ENCODE measurements at regions of chr10 and their contacts with region 1.

Region 1: GRCh38 chr10:91558473-91558872 is 74.4 kb downstream of the PPP1R3C start:
- DNase-seq: no peak
- H3K4me3 ChIP-seq: no peak overlapping the region
- H3K27ac ChIP-seq: no peak overlapping the region
- H3K4me1 ChIP-seq: no peaks in the 10 kb centered on the region
- H3K27me3 ChIP-seq: no peaks in the 10 kb centered on the region
- CTCF ChIP-seq: no peak

Region 2: GRCh38 chr10:89683883-89684282 is 1874.6 kb before region 1 on chr10:
- CTCF ChIA-PET with region 1: no interaction called
- POLR2A ChIA-PET with region 1: interaction called, 13 read pairs
- intact Hi-C with region 1: no loop called
- DNase-seq: no peak
- H3K4me3 ChIP-seq: no peak overlapping the region
- H3K27ac ChIP-seq: no peak overlapping the region
- H3K4me1 ChIP-seq: no peaks in the 10 kb centered on the region
- H3K27me3 ChIP-seq: no peaks in the 10 kb centered on the region
- CTCF ChIP-seq: no peak

Region 3: GRCh38 chr10:91541481-91541880 is 17.0 kb before region 1 on chr10:
- CTCF ChIA-PET with region 1: no interaction called
- POLR2A ChIA-PET with region 1: no interaction called
- intact Hi-C with region 1: no loop called
- DNase-seq: peak; percentile 97
- H3K4me3 ChIP-seq: no peak overlapping the region
- H3K27ac ChIP-seq: peak overlapping the region; percentile 85
- H3K4me1 ChIP-seq: peaks cover 28% of the 10 kb centered on the region
- H3K27me3 ChIP-seq: no peaks in the 10 kb centered on the region
- CTCF ChIP-seq: no peak

Region 4: GRCh38 chr10:92640110-92640509 is 1081.6 kb after region 1 on chr10:
- CTCF ChIA-PET with region 1: no interaction called
- POLR2A ChIA-PET with region 1: no interaction called
- intact Hi-C with region 1: no loop called
- DNase-seq: no peak
- H3K4me3 ChIP-seq: no peak overlapping the region
- H3K27ac ChIP-seq: no peak overlapping the region
- H3K4me1 ChIP-seq: no peaks in the 10 kb centered on the region
- H3K27me3 ChIP-seq: no peaks in the 10 kb centered on the region
- CTCF ChIP-seq: no peak

Measured in A673 (cell line).